Naive thymus-derived CD4-positive, alpha-beta T cell (primary cell): ENCODE measurements at regions of chr19 and their contacts with region 1.

Region 1: DNA sequence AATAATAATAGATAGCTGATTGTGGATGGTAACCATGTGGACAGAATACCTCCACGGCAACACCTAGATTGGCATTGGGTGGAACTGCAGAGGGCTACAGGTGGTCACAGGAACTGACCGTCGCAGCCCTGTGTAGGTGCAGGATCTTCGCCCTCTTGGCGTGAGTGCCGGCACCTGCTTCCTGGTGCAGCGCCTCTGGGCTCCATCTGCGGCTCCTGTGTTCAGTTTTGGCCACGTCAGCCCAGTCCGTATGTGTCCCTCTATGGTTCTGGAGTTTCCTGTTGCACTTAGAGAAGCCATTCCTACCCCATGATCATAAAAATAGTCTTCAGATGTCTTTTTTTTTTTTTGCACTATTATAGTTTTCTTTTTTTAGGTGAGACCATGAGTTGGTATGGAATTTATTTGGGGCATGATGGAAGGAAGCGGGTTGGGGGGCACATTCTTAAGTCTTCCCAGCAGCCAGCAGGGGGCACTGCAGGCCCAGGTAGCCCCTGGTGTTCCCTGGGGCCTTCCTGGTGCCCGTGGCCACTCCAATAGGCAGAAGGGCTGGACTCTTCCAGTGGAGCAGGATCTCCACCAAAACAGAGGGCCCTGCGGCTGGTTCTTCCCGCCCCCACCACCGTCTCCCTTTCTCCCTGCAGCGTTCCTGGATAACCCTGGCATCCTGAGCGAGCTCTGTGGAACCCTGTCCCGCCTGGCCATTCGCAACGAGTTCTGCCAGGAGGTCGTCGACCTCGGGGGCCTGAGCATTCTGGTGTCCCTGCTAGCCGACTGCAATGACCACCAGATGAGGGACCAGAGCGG is 10.1 kb upstream of the SLC25A42 start:
- DNase-seq: peak; percentile 28 to 70 (median 55)
- ATAC-seq: peak; percentile 72
- H3K4me3 ChIP-seq: no peak overlapping the region
- H3K4me3 Mint-ChIP-seq: no peak overlapping the region
- H3K27ac ChIP-seq: no peak overlapping the region
- H3K27ac Mint-ChIP-seq: no peak overlapping the region
- H3K4me1 ChIP-seq: no peaks in the 10 kb centered on the region
- H3K4me1 Mint-ChIP-seq: no peaks in the 10 kb centered on the region
- H3K27me3 ChIP-seq: no peaks in the 10 kb centered on the region
- H3K27me3 Mint-ChIP-seq: no peaks in the 10 kb centered on the region

Region 2: GRCh38 chr19:18960351-18960750 is 93.4 kb before region 1 on chr19:
- CTCF ChIA-PET with region 1: no interaction called
- POLR2A ChIA-PET with region 1: no interaction called
- intact Hi-C with region 1: no loop called
- DNase-seq: no peak
- ATAC-seq: no peak
- H3K4me3 ChIP-seq: no peak overlapping the region
- H3K4me3 Mint-ChIP-seq: no peak overlapping the region
- H3K27ac ChIP-seq: no peak overlapping the region
- H3K27ac Mint-ChIP-seq: no peak overlapping the region
- H3K4me1 ChIP-seq: peaks cover 0 to 4% of the 10 kb centered on the region in 2 donors
- H3K4me1 Mint-ChIP-seq: peaks cover 11 to 14% (median 12%) of the 10 kb centered on the region in 7 donors
- H3K27me3 ChIP-seq: no peaks in the 10 kb centered on the region
- H3K27me3 Mint-ChIP-seq: peaks cover 0 to 14% (median 11%) of the 10 kb centered on the region in 5 donors

Region 3: DNA sequence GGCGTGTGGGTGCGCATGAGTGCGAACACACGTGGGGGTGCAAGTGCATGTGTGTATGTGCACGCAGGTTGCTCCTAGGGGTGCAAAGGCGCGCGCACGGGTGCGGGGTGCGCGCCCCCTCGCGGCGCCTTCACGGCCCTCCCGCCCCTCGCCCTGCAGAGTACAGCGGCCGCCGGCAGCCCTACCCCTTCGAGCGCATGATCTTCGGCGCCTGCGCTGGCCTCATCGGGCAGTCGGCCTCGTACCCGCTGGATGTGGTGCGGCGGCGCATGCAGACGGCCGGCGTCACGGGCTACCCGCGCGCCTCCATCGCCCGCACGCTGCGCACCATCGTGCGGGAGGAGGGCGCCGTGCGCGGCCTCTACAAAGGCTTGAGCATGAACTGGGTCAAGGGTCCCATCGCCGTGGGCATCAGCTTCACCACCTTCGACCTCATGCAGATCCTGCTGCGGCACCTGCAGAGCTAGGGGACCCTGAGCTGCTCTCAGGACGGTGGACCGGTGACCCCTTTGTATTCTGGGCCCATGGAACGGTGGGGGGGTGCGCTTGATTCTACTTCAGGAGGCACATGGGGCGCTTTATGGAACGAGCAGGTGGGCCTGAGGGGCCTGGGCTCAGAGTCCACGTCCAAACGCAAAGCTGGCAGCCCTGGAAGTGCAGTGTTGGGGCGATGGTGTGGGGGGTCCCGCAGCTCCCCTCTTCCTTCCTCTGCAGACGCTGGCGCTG is 56.9 kb after region 1 on chr19:
- CTCF ChIA-PET with region 1: interaction called, 9 read pairs
- POLR2A ChIA-PET with region 1: no interaction called
- intact Hi-C with region 1: loop called in 1 of 2 experiments (anchors 1 kb)
- DNase-seq: peak in 5 of 9 donors; percentile 13 to 28 (median 16)
- ATAC-seq: peak; percentile 68
- H3K4me3 ChIP-seq: no peak overlapping the region
- H3K4me3 Mint-ChIP-seq: peak overlapping the region in 2 of 10 donors; percentile 23 to 54
- H3K27ac ChIP-seq: no peak overlapping the region
- H3K27ac Mint-ChIP-seq: no peak overlapping the region
- H3K4me1 ChIP-seq: no peaks in the 10 kb centered on the region
- H3K4me1 Mint-ChIP-seq: peaks cover 0 to 13% (median 8%) of the 10 kb centered on the region in 7 donors
- H3K27me3 ChIP-seq: no peaks in the 10 kb centered on the region
- H3K27me3 Mint-ChIP-seq: peaks cover 0 to 6% (median 0%) of the 10 kb centered on the region in 5 donors

Region 4: GRCh38 chr19:19115954-19116353 is 62.2 kb after region 1 on chr19:
- CTCF ChIA-PET with region 1: interaction called, 9 read pairs
- POLR2A ChIA-PET with region 1: no interaction called
- intact Hi-C with region 1: loop called (anchors 1 kb)
- DNase-seq: peak in 6 of 9 donors; percentile 15 to 54 (median 26)
- ATAC-seq: peak; percentile 63
- H3K4me3 ChIP-seq: no peak overlapping the region
- H3K4me3 Mint-ChIP-seq: no peak overlapping the region
- H3K27ac ChIP-seq: no peak overlapping the region
- H3K27ac Mint-ChIP-seq: no peak overlapping the region
- H3K4me1 ChIP-seq: no peaks in the 10 kb centered on the region
- H3K4me1 Mint-ChIP-seq: peaks cover 0 to 7% (median 0%) of the 10 kb centered on the region in 7 donors
- H3K27me3 ChIP-seq: no peaks in the 10 kb centered on the region
- H3K27me3 Mint-ChIP-seq: peaks cover 0 to 4% (median 0%) of the 10 kb centered on the region in 5 donors

Region 5: DNA sequence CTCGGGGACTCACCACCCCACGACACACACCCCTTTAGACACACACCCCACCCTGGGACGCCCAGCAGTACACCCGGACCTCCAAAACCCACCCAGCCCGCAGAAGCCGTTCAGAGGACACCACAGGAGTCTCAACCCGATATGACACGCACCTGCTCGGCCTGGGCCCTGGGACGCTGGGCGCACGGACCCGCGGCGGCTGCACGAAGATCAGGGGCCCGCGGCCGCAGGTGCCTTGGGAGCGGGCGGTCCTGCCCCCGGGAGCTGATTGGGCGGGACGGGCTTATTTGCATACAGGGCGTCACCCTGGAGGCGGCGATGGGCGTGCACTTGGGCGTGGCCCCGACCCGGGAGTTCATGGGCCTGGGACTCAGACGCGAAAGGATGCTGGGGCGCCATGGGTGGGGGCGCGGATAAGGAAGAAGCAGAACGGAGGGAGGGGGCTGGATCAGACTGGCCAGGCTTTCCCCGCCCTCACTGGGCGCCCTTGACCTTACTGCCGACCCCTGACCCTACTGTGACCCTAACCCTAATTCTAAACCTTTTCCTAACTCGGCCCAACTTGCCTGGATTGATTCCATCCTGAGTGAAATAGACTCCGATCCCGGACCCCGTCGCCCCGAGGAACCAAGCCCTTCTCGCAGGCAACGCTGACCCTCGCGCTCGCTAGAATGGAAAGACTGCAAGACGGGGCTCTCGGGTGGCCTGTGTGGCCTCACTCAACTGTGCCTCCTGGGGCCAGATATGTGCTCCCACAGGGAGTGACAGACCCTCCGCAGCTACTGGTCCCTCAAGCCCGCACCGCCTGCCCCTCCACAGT is 116.6 kb after region 1 on chr19 and contains the start of gene MEF2B:
- CTCF ChIA-PET with region 1: interaction called, 6 read pairs
- POLR2A ChIA-PET with region 1: no interaction called
- intact Hi-C with region 1: loop called in 1 of 2 experiments (anchors 1 kb)
- DNase-seq: peak; percentile 45 to 84 (median 77)
- ATAC-seq: peak; percentile 98
- H3K4me3 ChIP-seq: peak within 1 kb of the TSS; percentile 32
- H3K4me3 Mint-ChIP-seq: peak within 1 kb of the TSS; percentile 2 to 84 (median 71)
- H3K27ac ChIP-seq: no peak within 1 kb of the TSS
- H3K27ac Mint-ChIP-seq: peak within 1 kb of the TSS in 8 of 9 donors; percentile 25 to 70 (median 51)
- H3K4me1 ChIP-seq: peaks cover 0 to 10% of the 10 kb centered on the region in 2 donors
- H3K4me1 Mint-ChIP-seq: peaks cover 14 to 20% (median 17%) of the 10 kb centered on the region in 7 donors
- H3K27me3 ChIP-seq: no peaks in the 10 kb centered on the region
- H3K27me3 Mint-ChIP-seq: peaks cover 0 to 5% (median 0%) of the 10 kb centered on the region in 5 donors
- total RNA-seq, gene MEF2B: 3.0 to 6.4 (median 4.9) TPM